Activated naive CD4-positive, alpha-beta T cell treated with anti-CD3 and anti-CD28 coated beads for 36 hours (primary cell): ENCODE measurements at regions of chr12 and their contacts with region 1.

Region 1: GRCh38 chr12:120686690-120687577 is at the start of gene MLEC:
- DNase-seq: peak; percentile 99
- H3K4me3 Mint-ChIP-seq: peak within 1 kb of the TSS; percentile 87
- H3K27ac Mint-ChIP-seq: peak within 1 kb of the TSS; percentile 91
- H3K4me1 Mint-ChIP-seq: peaks cover 42% of the 10 kb centered on the region
- H3K27me3 Mint-ChIP-seq: no peaks in the 10 kb centered on the region
- total RNA-seq, gene MLEC: 78.6 to 89.7 TPM

Region 2: DNA sequence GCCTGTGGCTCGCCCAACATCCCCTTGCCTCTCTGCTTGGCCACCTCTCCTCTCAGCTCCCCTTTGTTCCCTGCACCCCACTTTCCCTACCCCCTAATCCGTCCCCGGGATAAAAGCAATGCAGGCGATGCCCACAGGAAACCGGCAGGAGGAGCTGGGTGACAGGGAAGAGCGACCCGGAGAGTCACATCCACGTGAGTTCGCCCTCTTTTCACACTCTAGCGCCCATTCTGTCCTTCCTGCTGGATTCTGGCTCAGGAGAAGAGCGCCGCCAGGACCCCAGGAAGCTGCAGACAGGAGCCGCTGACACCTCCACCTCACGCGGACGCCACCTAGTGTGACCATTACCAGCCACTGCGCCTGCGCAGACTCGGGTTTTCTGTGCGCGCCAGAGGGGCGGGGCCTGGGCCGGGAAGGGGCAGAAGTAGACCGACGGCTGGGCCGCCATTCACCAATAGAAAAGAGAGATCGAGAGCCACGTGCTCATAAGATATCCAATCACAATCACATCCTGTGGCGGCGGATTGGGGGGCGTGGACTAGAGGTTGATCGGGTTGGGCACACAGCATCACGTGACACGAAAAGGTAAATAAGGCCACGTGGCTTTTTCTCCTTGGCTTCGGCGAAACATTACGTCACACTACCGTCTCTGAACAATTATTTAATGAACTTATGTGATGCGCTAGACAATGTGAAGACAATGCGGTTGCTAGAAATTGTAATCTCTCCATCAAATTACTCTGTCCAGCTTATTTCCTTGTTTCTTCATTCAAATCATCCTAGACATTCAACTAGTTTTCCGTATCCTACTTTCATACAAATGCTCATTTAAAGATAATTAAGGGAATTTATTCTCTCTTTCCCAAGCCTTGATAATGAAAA is 369.5 kb before region 1 on chr12:
- CTCF ChIA-PET with region 1: no interaction called
- intact Hi-C with region 1: loop called (anchors 2 kb)
- DNase-seq: peak; percentile 100
- H3K4me3 Mint-ChIP-seq: peak overlapping the region; percentile 87
- H3K27ac Mint-ChIP-seq: peak overlapping the region; percentile 88
- H3K4me1 Mint-ChIP-seq: peaks cover 11% of the 10 kb centered on the region
- H3K27me3 Mint-ChIP-seq: no peaks in the 10 kb centered on the region

Region 3: GRCh38 chr12:120394483-120395367 is 292.2 kb before region 1 on chr12:
- CTCF ChIA-PET with region 1: no interaction called
- intact Hi-C with region 1: no loop called
- DNase-seq: no peak
- H3K4me3 Mint-ChIP-seq: no peak overlapping the region
- H3K27ac Mint-ChIP-seq: no peak overlapping the region
- H3K4me1 Mint-ChIP-seq: no peaks in the 10 kb centered on the region
- H3K27me3 Mint-ChIP-seq: peaks cover 19% of the 10 kb centered on the region

Region 4: DNA sequence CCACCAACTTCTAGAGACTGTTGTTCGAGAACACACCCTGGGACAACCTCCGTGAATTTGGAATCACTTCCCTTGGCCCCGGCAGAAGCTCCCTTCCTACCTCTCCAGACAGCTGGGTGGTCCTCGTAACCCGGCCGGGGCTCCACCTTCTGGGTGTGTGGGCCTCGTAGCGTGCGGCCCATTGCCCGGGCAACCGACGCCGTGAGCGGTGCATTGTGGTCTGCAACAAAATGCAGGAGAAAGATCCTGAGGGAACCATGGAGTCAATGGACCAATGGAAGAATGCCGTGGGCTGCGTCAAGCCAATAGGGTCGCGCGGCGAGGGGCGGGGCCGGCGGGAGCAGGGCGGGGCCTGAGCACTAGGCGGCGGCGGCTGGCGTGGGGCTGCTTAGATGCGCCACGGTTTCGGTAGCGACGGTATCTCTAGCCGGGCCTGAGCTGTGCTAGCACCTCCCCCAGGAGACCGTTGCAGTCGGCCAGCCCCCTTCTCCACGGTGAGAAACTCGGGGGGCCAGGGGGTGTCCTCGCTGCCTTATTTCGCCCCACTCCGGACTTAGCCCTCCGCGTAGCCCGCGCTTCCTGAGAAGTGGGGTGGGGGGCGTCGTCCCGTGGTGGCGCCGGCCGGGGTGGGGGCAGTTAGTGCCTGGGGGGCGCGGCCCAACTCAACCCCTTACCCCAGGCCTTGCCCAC is 191.1 kb before region 1 on chr12 and contains the start of gene DYNLL1:
- CTCF ChIA-PET with region 1: no interaction called
- intact Hi-C with region 1: loop called (anchors 2 kb)
- DNase-seq: peak; percentile 97
- H3K4me3 Mint-ChIP-seq: peak within 1 kb of the TSS; percentile 84
- H3K27ac Mint-ChIP-seq: peak within 1 kb of the TSS; percentile 77
- H3K4me1 Mint-ChIP-seq: peaks cover 21% of the 10 kb centered on the region
- H3K27me3 Mint-ChIP-seq: no peaks in the 10 kb centered on the region
- total RNA-seq, gene DYNLL1: 93.4 to 93.5 TPM

Region 5: DNA sequence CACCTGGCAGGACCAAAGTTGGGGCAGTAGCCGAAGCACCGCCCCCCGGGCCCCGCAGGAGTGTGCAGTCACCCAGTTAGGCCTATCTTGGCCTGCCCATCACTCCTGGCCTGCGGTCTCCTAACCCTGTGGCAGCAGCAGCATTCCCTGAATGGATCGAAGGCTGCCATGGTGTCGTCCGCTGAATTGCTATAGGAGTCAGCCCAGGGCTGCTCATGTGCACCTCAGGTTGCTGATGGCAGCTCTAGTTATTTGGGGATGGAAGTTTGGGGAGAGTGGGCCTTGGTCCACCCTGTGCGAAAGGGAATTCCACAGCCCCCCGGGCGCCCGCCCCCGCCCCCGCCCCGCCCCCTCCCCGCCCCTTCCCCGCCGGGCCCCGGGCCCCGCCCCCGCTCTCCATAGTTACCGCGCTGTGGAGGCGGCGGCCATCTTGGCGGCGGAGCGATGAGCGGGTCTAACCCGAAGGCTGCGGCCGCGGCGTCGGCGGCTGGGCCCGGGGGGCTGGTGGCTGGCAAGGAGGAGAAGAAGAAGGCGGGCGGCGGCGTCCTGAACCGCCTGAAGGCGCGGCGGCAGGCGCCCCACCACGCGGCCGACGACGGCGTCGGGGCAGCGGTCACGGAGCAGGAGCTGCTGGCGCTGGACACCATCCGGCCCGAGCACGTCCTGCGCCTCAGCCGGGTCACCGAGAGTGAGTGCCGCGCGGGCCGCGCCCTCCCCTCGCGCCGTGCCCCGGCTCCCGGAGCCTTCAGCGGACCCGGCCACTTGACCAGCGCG is 23.3 kb after region 1 on chr12 and contains the start of gene UNC119B:
- CTCF ChIA-PET with region 1: interaction called, 7 read pairs
- intact Hi-C with region 1: loop called (anchors 1 kb)
- DNase-seq: peak; percentile 73
- H3K4me3 Mint-ChIP-seq: peak within 1 kb of the TSS; percentile 85
- H3K27ac Mint-ChIP-seq: peak within 1 kb of the TSS; percentile 84
- H3K4me1 Mint-ChIP-seq: peaks cover 32% of the 10 kb centered on the region
- H3K27me3 Mint-ChIP-seq: no peaks in the 10 kb centered on the region
- total RNA-seq, gene UNC119B: 31.9 to 32.6 TPM

Region 6: DNA sequence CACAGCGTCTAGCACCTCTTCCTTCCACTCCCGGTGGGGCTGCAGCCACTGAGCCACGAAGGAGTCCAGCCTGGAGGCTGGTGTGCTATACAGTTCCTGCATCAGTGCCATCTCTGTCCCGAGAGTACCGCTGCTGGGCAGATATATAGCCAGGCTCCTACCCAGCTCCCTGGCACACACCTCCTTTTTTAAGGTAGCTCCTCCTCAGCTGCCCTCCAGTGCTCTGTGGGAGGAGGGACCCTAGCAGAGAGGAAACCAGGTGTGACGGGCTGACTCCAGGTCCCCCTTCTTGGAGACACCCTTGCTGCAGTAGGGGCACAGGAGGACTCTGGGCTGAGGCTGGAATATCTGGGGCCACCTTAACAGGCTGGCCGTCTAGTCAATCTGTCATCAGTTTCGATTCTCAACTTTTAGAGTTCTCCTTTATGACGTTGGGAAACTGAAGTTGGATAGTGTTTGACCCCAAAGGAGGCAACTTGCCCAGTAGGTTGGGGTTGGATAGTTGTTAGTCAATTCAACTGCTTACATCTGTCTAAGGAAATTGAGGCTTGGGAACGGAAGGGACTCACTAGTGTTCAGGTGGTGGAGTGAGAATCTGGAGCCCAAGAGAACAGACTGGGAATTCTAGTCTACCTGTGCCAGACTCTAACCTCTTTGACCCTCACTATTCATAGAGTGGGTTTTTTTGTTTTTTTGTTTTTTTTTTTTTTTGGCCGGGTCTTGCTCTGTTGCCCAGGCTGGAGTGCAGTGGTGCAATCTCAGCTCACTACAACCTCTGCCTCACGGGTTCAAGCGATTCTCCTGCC is 352.1 kb after region 1 on chr12 and contains the start of gene OASL:
- CTCF ChIA-PET with region 1: no interaction called
- intact Hi-C with region 1: loop called (anchors 2 kb)
- DNase-seq: peak; percentile 55
- H3K4me3 Mint-ChIP-seq: peak within 1 kb of the TSS; percentile 75
- H3K27ac Mint-ChIP-seq: peak within 1 kb of the TSS; percentile 70
- H3K4me1 Mint-ChIP-seq: peaks cover 50% of the 10 kb centered on the region
- H3K27me3 Mint-ChIP-seq: peaks cover 8% of the 10 kb centered on the region
- total RNA-seq, gene OASL: 12.4 to 13.4 TPM